ENCODE measurements at regions of chr12 and their contacts with region 1.

Region 1: GRCh38 chr12:19739183-19739776 is 300.0 kb downstream of the AEBP2 start:
- DNase-seq: peak; percentile 92
- H3K4me3 ChIP-seq: no peak overlapping the region
- H3K27ac ChIP-seq: peak overlapping the region; percentile 24
- H3K4me1 ChIP-seq: peaks cover 31% of the 10 kb centered on the region
- H3K27me3 ChIP-seq: no peaks in the 10 kb centered on the region
- CTCF ChIP-seq: peak; percentile 25 to 40
- POLR2A ChIP-seq: no peak

Region 2: GRCh38 chr12:19474147-19474546 is 265.1 kb before region 1 on chr12:
- CTCF ChIA-PET with region 1: no interaction called
- POLR2A ChIA-PET with region 1: no interaction called
- dilution Hi-C with region 1: no loop called
- intact Hi-C with region 1: no loop called
- DNase-seq: no peak
- H3K4me3 ChIP-seq: no peak overlapping the region
- H3K27ac ChIP-seq: no peak overlapping the region
- H3K4me1 ChIP-seq: no peaks in the 10 kb centered on the region
- H3K27me3 ChIP-seq: no peaks in the 10 kb centered on the region
- CTCF ChIP-seq: no peak
- POLR2A ChIP-seq: no peak

Region 3: DNA sequence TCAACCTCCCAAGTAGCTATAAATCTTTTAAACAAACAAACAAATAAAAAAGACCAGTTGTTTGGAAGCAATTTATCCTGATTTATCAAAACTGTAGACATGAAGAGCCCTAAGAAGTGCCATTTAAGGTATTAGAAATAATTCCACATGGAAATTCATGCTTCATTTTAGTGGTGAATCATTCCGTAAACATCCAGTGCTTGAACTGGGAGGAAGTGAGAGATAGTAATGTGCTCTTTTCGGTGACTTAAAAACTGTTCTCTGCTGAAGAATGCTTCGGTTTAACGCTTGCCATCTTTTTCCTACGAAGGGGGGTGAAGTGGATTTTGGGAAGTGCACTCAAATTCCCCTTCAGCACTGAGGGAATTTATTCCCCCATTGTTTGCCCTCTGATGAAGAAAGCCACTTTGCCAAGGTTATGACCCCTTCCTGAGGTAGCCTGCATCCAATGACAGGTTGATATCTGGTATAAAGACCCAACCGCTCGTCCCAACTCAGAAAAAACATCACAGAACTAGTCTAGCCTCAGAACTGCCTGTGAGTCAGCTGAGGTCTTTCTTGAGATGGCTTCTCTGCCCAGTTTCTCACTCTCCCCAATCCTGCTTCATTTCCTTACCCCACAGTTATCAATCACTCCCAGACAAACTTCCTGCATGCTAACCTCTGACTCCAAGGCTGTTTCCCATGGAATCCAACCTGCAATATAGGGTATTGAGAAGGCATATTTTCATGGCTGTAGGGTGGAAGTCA is 55.9 kb before region 1 on chr12:
- CTCF ChIA-PET with region 1: interaction called, 8 read pairs
- POLR2A ChIA-PET with region 1: no interaction called
- dilution Hi-C with region 1: no loop called
- intact Hi-C with region 1: loop called (anchors 1 kb)
- DNase-seq: peak; percentile 99
- H3K4me3 ChIP-seq: no peak overlapping the region
- H3K27ac ChIP-seq: peak overlapping the region; percentile 97
- H3K4me1 ChIP-seq: peaks cover 28% of the 10 kb centered on the region
- H3K27me3 ChIP-seq: no peaks in the 10 kb centered on the region
- CTCF ChIP-seq: no peak
- POLR2A ChIP-seq: peak; percentile 48

Region 4: DNA sequence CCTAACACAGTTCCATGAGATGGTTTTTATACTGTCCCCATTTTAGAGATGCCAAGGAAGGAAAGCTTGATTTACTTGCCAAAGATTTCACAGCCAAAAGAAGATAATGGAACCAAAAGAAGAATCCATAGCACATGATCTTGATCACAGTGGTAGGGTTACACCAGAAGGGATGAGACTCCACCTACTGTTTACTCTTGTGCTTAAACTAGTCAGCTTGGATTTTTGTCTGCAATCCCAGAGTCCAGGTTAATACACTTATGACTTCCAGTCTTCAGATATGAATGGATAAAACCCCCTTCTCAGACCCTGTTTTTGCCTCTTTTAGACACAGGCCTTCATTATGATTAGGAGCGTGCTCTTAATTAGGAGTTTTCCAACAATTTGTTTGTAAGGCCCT is 154.2 kb after region 1 on chr12:
- CTCF ChIA-PET with region 1: interaction called, 13 read pairs
- POLR2A ChIA-PET with region 1: no interaction called
- dilution Hi-C with region 1: no loop called
- intact Hi-C with region 1: no loop called
- DNase-seq: peak; percentile 31
- H3K4me3 ChIP-seq: no peak overlapping the region
- H3K27ac ChIP-seq: no peak overlapping the region
- H3K4me1 ChIP-seq: peaks cover 7% of the 10 kb centered on the region
- H3K27me3 ChIP-seq: no peaks in the 10 kb centered on the region
- CTCF ChIP-seq: no peak
- POLR2A ChIP-seq: no peak

Region 5: DNA sequence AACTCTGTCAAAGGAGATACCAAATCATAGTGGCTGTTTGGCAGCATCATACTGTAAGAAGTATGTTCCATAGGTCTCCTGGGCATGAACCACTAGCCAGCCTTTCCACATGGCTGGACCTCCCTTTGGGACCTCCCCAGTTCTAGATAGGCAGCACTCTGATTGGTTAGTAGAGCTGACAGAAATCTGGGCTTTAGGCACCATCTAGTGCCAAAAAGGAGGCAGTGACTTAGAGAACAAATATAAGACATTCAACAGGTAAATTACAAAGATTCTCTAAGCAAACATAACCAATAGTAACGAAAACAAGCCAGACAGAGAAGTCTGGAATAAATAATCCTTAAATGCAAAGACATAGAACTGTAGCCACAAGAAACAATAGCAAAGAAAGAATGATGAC is 481.1 kb after region 1 on chr12:
- CTCF ChIA-PET with region 1: interaction called, 49 read pairs
- POLR2A ChIA-PET with region 1: no interaction called
- dilution Hi-C with region 1: no loop called
- intact Hi-C with region 1: loop called (anchors 1 kb)
- DNase-seq: peak; percentile 61
- H3K4me3 ChIP-seq: no peak overlapping the region
- H3K27ac ChIP-seq: no peak overlapping the region
- H3K4me1 ChIP-seq: no peaks in the 10 kb centered on the region
- H3K27me3 ChIP-seq: no peaks in the 10 kb centered on the region
- CTCF ChIP-seq: peak; percentile 26 to 30
- POLR2A ChIP-seq: no peak

Region 6: GRCh38 chr12:20549107-20549719 is 809.9 kb after region 1 on chr12:
- CTCF ChIA-PET with region 1: interaction called, 30 read pairs
- POLR2A ChIA-PET with region 1: no interaction called
- dilution Hi-C with region 1: no loop called
- intact Hi-C with region 1: no loop called
- DNase-seq: peak; percentile 80
- H3K4me3 ChIP-seq: no peak overlapping the region
- H3K27ac ChIP-seq: no peak overlapping the region
- H3K4me1 ChIP-seq: peaks cover 9% of the 10 kb centered on the region
- H3K27me3 ChIP-seq: no peaks in the 10 kb centered on the region
- CTCF ChIP-seq: peak; percentile 47 to 58
- POLR2A ChIP-seq: no peak